CD4-positive, alpha-beta T cell (primary cell): ENCODE measurements at regions of chr22 and their contacts with region 1.

Region 1: DNA sequence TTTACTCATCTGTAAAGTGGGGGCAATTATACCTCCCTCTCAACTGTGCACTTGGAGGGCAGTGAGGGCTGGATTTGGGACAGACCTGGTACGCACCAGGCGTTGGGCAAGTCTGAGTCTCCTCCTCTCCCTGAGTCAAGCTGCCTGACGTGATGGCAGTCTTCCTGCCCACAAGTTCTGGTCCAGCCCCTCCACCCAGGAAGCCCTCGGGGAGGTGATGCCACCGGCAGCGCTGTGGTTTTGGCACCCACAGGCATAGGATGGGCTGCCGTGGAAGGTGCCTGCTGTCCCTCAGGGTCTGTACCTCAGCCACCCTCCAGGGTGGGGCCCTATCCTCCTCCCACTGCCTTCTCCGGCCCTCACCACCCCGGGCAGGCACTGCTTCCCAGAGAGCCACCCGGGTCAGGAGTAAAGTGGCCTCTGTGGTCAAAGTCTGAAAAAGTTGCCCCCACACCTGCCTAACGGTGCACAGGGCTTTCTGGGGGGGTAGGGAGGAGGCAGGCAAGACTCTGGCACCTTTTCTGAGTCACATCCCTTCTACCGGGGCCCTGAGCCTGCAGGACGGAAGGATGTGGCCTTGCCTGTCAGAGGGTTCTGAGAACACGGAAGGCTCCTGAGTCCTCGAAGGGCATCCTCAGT is 6.5 kb upstream of the APOBEC3H start:
- DNase-seq: peak; percentile 72 to 95 (median 84)
- ATAC-seq: peak; percentile 79
- H3K4me3 ChIP-seq: peak overlapping the region; percentile 29
- H3K4me3 Mint-ChIP-seq: peak overlapping the region; percentile 39
- H3K27ac ChIP-seq: peak overlapping the region; percentile 85 to 95
- H3K27ac Mint-ChIP-seq: peak overlapping the region; percentile 99
- H3K4me1 ChIP-seq: peaks cover 94% of the 10 kb centered on the region
- H3K4me1 Mint-ChIP-seq: peaks cover 80% of the 10 kb centered on the region
- H3K27me3 ChIP-seq: no peaks in the 10 kb centered on the region
- H3K27me3 Mint-ChIP-seq: no peaks in the 10 kb centered on the region
- CTCF ChIP-seq: no peak

Region 2: DNA sequence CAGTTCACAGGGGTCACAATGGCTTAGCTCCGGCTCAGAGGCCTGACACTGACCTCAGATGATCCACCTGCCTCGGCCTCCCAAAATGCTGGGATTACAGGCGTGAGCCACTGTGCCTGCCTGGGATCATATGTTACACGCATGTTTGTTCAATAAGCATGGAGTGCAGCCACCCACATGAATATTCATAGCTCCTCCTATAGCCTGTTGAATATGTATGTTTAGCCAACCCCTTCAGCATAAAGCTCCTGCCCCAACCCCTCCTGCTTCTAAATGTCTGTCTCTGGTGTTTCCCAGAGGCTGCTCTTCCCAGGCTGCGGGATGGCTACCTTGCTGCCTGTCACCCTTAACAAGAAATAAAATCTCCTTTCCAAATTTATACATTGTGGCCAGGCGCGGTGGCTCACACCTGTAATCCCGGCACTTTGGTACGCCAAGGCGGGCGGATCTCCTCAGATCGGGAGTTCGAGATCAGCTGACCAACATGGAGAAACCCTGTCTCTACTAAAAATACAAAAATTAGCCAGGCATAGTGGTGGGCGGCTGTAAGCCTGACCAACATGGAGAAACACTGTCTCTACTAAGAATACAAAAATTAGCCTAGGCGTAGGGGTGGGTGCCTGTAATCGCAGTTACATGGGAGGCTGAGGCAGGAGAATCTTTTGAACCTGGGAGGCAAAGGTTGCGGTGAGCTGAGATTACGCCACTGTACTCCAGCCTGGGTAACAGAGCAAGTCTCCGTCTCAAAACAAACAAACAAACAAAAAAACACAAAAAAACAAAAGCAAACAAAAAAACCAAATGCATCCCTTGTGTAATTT is 51.0 kb before region 1 on chr22:
- CTCF ChIA-PET with region 1: no interaction called
- POLR2A ChIA-PET with region 1: interaction called, 3 read pairs
- intact Hi-C with region 1: loop called in 1 of 2 experiments (anchors 5 kb)
- DNase-seq: no peak
- ATAC-seq: no peak
- H3K4me3 ChIP-seq: peak overlapping the region; percentile 67
- H3K4me3 Mint-ChIP-seq: peak overlapping the region; percentile 84
- H3K27ac ChIP-seq: peak overlapping the region in 1 of 2 donors; percentile 17
- H3K27ac Mint-ChIP-seq: peak overlapping the region; percentile 85
- H3K4me1 ChIP-seq: peaks cover 36% of the 10 kb centered on the region
- H3K4me1 Mint-ChIP-seq: peaks cover 39% of the 10 kb centered on the region
- H3K27me3 ChIP-seq: no peaks in the 10 kb centered on the region
- H3K27me3 Mint-ChIP-seq: no peaks in the 10 kb centered on the region
- CTCF ChIP-seq: no peak

Region 3: DNA sequence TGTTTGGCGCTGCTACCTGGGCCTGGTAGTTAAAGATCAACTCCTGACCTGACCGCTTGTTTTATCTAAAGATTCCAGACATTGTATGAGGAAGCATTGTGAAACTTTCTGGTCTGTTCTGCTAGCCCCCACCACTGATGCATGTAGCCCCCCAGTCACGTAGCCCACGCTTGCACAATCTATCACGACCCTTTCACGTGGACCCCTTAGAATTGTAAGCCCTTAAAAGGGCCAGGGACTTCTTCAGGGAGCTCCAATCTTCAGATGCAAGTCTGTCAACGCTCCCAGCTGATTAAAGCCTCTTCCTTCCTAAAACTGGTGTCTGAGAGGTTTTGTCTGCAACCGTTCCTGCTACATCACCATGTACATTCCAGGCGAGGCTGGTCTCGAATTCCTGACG is 34.9 kb before region 1 on chr22:
- CTCF ChIA-PET with region 1: no interaction called
- POLR2A ChIA-PET with region 1: no interaction called
- intact Hi-C with region 1: no loop called
- DNase-seq: no peak
- ATAC-seq: no peak
- H3K4me3 ChIP-seq: no peak overlapping the region
- H3K4me3 Mint-ChIP-seq: no peak overlapping the region
- H3K27ac ChIP-seq: no peak overlapping the region
- H3K27ac Mint-ChIP-seq: no peak overlapping the region
- H3K4me1 ChIP-seq: no peaks in the 10 kb centered on the region
- H3K4me1 Mint-ChIP-seq: no peaks in the 10 kb centered on the region
- H3K27me3 ChIP-seq: no peaks in the 10 kb centered on the region
- H3K27me3 Mint-ChIP-seq: no peaks in the 10 kb centered on the region
- CTCF ChIP-seq: no peak

Region 4: DNA sequence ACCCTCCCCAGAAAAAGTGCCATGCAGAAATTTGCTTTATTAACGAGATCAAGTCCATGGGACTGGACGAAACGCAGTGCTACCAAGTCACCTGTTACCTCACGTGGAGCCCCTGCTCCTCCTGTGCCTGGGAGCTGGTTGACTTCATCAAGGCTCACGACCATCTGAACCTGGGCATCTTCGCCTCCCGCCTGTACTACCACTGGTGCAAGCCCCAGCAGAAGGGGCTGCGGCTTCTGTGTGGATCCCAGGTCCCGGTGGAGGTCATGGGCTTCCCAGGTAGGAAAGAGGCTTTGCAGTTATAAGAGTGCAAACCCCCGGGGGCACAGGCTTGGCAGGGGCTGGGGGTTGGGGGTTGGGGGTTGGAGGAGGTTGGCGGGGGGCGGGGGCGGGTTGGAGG is 10.7 kb after region 1 on chr22:
- CTCF ChIA-PET with region 1: no interaction called
- POLR2A ChIA-PET with region 1: no interaction called
- intact Hi-C with region 1: no loop called
- DNase-seq: no peak
- ATAC-seq: no peak
- H3K4me3 ChIP-seq: no peak overlapping the region
- H3K4me3 Mint-ChIP-seq: no peak overlapping the region
- H3K27ac ChIP-seq: no peak overlapping the region
- H3K27ac Mint-ChIP-seq: no peak overlapping the region
- H3K4me1 ChIP-seq: peaks cover 46% of the 10 kb centered on the region
- H3K4me1 Mint-ChIP-seq: peaks cover 41% of the 10 kb centered on the region
- H3K27me3 ChIP-seq: no peaks in the 10 kb centered on the region
- H3K27me3 Mint-ChIP-seq: no peaks in the 10 kb centered on the region
- CTCF ChIP-seq: no peak

Region 5: GRCh38 chr22:39117585-39118191 is 27.1 kb after region 1 on chr22:
- CTCF ChIA-PET with region 1: interaction called, 7 read pairs
- POLR2A ChIA-PET with region 1: interaction called, 3 read pairs
- intact Hi-C with region 1: loop called in 1 of 2 experiments (anchors 1 kb)
- DNase-seq: peak; percentile 54 to 85 (median 67)
- ATAC-seq: peak; percentile 56
- H3K4me3 ChIP-seq: peak overlapping the region; percentile 9
- H3K4me3 Mint-ChIP-seq: peak overlapping the region; percentile 27
- H3K27ac ChIP-seq: peak overlapping the region; percentile 45 to 49
- H3K27ac Mint-ChIP-seq: peak overlapping the region; percentile 67
- H3K4me1 ChIP-seq: peaks cover 29% of the 10 kb centered on the region
- H3K4me1 Mint-ChIP-seq: peaks cover 21% of the 10 kb centered on the region
- H3K27me3 ChIP-seq: no peaks in the 10 kb centered on the region
- H3K27me3 Mint-ChIP-seq: no peaks in the 10 kb centered on the region
- CTCF ChIP-seq: peak; percentile 81

Region 6: DNA sequence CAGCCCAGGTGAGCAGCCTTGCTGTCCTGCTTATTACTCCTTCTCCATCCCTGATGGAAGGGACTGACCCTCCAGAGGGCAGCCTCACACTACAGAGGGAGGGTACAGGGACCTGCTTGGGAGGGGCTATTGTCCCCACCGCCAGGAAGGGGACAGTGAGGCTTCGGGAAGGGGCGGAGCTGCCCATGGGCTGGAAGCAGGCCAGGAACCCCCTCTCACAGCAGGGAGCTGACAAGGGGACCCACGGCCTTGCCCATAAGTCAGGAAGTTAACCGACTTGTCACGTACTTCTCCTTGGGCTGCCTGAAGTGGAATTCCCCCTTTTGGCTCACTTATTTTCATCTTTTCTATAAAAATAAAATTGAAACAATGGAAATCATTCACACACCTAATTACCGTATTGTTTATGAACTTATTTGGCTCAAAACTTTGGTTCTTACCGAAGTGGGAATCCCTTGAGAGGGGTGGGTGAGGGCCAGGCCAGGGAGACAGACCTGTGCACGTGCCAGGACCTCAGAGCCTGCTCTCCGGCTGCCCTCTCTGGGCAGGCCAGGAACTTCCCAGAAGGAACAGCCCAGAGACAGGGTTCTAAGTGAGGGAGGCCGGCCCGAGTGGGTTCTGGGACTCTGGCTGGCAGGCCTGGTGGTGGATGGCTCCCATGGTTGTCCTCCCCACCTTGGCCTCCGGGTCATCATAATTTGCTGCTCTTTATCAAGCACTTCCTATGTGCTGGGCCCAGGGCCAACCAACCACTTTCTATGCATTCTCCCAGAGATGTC is 372.1 kb after region 1 on chr22:
- CTCF ChIA-PET with region 1: no interaction called
- POLR2A ChIA-PET with region 1: no interaction called
- intact Hi-C with region 1: no loop called
- DNase-seq: peak in 1 of 14 experiments; percentile 31
- ATAC-seq: no peak
- H3K4me3 ChIP-seq: no peak overlapping the region
- H3K4me3 Mint-ChIP-seq: no peak overlapping the region
- H3K27ac ChIP-seq: no peak overlapping the region
- H3K27ac Mint-ChIP-seq: no peak overlapping the region
- H3K4me1 ChIP-seq: peaks cover 10% of the 10 kb centered on the region
- H3K4me1 Mint-ChIP-seq: peaks cover 8% of the 10 kb centered on the region
- H3K27me3 ChIP-seq: peaks cover 14 to 15% of the 10 kb centered on the region in 2 experiments
- H3K27me3 Mint-ChIP-seq: peaks cover 21% of the 10 kb centered on the region
- CTCF ChIP-seq: no peak